ENCODE measurements at regions of chr17 and their contacts with region 1.

Region 1: GRCh38 chr17:64306850-64307463 is 43.9 kb upstream of the TEX2 start:
- DNase-seq: peak; percentile 56
- H3K27ac ChIP-seq: 0 out of 2 replicates have a peak overlapping the region, but pooled peaks have one; percentile 21
- CTCF ChIP-seq: peak; percentile 85

Region 2: GRCh38 chr17:63984651-63985386 is 322.1 kb before region 1 on chr17:
- CTCF ChIA-PET with region 1: no interaction called
- POLR2A ChIA-PET with region 1: no interaction called
- DNase-seq: peak; percentile 79
- H3K27ac ChIP-seq: peak overlapping the region; percentile 46
- CTCF ChIP-seq: no peak

Region 3: DNA sequence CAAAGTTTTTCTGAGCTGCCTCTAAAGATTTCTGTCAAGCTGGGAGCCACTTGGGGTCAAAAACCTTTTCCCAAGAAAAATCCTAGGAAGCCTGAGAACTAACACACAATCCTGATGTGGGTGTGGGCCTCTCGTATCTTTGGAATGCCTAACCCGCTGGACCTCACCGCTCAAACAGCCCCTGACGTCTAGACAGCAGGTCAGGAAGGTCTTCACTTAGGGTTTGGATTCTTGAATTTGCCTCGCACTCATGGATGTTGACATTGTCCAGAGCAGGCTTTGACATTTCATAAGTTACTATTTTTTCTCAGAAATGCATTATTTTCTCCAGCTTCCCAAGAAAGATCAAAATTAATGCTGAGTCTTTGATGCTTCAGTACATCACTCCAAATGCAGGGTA is 62.8 kb before region 1 on chr17:
- CTCF ChIA-PET with region 1: no interaction called
- POLR2A ChIA-PET with region 1: interaction called, 12 read pairs
- DNase-seq: no peak
- H3K27ac ChIP-seq: peak overlapping the region; percentile 15; the same call in 1 of the 2 replicates
- CTCF ChIP-seq: no peak

Region 4: GRCh38 chr17:64496786-64497564 is 190.0 kb after region 1 on chr17 and contains the start of gene POLG2:
- CTCF ChIA-PET with region 1: no interaction called
- POLR2A ChIA-PET with region 1: interaction called, 13 read pairs
- DNase-seq: peak; percentile 92
- H3K27ac ChIP-seq: peak within 1 kb of the TSS; percentile 90
- CTCF ChIP-seq: peak; percentile 74